Left cardiac atrium (tissue), 4 donors: ENCODE measurements at regions of chr5 and their contacts with region 1.

Region 1: DNA sequence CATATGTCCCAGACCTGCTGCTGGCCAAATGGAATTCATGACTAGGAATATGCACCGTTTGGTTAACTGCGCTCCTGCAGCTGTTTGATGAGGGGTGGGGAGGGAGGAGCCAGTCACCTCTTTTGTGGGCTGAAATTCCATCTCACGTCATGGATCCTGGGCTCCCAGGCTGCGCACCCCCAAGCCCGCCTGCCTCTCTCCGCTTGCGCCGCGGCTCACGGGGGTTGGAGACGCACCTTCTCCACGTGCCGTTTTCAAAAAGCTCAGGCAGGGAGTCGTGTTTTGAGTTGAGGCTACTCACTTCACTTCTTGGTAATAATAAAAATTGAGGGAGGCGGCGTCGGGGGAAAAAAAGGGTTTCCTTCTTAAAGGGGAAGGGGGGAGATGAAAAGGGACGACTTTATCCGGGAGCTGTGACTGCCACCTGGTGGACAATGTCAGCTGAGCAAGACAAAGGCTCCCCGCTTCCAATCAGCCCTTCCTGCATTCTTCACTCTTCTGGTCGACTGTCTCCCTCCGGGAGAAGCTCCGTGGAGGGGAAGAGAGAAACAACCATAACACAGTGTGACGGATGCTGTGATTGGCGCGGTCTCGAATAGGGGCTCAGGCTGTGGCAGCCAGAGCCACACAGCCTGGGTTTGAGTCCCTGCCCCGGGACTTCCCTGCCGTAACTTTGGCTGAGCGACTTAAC is 15.9 kb upstream of the C5orf47 start:
- DNase-seq: peak; percentile 84
- ATAC-seq: peak; percentile 85 to 87

Region 2: GRCh38 chr5:173615884-173616576 is 357.0 kb before region 1 on chr5:
- intact Hi-C with region 1: loop called (anchors 1 to 5 kb)
- DNase-seq: peak; percentile 59
- ATAC-seq: peak; percentile 77

Region 3: GRCh38 chr5:173625696-173626504 is 347.2 kb before region 1 on chr5:
- intact Hi-C with region 1: loop called in 1 of 2 experiments (anchors 5 kb)
- DNase-seq: no peak
- ATAC-seq: peak; percentile 38 to 63

Region 4: GRCh38 chr5:173764321-173765029 is 208.6 kb before region 1 on chr5:
- intact Hi-C with region 1: loop called in 1 of 2 experiments (anchors 5 kb)
- DNase-seq: peak; percentile 90
- ATAC-seq: peak; percentile 61 to 90

Region 5: DNA sequence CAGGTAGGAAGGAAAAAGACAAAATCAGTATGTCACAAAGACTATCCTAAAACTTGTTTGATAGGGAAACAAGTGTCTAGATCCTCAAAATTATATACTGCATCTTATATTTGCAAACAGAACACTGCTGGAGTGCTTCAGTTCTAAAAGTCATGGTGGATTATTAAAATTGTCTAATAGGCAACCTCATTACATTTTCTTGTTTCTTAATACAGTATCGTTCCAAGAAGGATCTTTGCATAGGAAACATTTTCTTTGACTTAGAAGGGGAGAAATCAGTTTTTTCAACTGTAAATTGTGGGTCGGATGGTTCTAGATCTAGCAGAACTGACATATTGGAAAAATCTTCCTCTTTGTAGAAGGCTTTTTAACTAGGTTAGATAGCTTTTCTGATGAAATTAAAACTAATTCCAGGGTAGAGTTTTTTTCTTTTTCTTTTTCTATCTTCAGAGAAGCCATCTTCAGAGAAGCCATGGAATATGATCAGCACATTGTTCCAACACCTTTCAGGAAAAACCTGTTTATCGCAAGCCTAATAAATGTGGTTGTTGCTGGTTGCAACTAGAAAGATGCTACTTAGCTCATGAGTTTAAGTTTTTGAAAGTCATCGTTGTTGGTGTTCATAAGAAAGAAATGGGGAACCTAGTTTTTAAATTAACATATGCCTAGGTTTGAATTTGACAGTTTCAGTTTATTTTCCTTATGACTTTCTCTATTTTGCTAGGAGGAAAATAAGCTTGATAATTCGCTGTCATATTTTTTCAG is 77.5 kb before region 1 on chr5:
- intact Hi-C with region 1: loop called in 1 of 2 experiments (anchors 2 kb)
- DNase-seq: no peak
- ATAC-seq: no peak

Region 6: DNA sequence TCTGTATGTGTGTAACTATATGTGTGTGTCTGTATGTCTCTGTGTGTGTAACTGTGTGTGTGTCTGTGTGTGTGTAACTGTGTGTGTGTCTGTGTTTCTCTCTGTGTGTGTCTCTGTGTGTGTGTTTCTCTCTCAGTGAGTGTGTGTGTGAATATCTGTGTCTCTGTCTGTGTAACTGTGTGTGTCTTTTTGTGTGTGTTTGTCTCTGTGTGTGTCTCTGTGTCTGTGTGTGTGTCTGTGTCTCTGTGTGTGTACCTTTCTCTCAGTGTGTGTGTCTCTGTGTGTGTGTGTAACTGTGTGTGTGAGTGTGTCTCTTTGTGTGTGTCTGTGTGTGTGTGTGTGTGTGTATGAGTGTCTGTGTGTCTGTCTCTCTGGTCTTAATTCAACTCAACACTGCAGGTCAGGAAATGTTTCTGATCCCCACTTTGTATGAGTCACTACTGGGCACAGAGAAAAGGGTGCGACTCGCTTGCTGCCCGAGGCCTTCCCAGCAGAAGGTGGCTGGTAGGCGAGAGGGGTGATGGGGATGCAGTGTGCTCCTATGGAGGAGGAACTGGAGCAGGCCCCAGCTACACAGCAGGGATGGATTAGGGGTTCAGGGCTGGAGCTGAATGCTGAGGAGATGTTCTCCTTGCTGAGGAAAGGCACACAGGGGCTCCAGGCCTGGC is 124.6 kb after region 1 on chr5:
- intact Hi-C with region 1: no loop called
- DNase-seq: no peak
- ATAC-seq: no peak